ENCODE measurements at regions of chr11 and their contacts with region 1.

Region 1: GRCh38 chr11:59822989-59823566 is 12.5 kb upstream of the MRPL16 start:
- DNase-seq: peak; percentile 55 to 79 (median 72)
- H3K4me3 ChIP-seq: no peak overlapping the region
- H3K4me3 Mint-ChIP-seq: peak overlapping the region in 1 of 2 donors; percentile 84
- H3K27ac ChIP-seq: no peak overlapping the region
- H3K27ac Mint-ChIP-seq: no peak overlapping the region
- H3K4me1 ChIP-seq: peaks cover 12% of the 10 kb centered on the region in 2 donors
- H3K4me1 Mint-ChIP-seq: peaks cover 17% of the 10 kb centered on the region
- H3K27me3 ChIP-seq: no peaks in the 10 kb centered on the region
- H3K27me3 Mint-ChIP-seq: peaks cover 0 to 3% (median 0%) of the 10 kb centered on the region in 3 donors
- CTCF ChIP-seq: peak; percentile 80

Region 2: GRCh38 chr11:59875856-59876519 is 52.9 kb after region 1 on chr11:
- intact Hi-C with region 1: no loop called
- DNase-seq: no peak
- H3K4me3 ChIP-seq: no peak overlapping the region
- H3K4me3 Mint-ChIP-seq: no peak overlapping the region
- H3K27ac ChIP-seq: no peak overlapping the region
- H3K27ac Mint-ChIP-seq: no peak overlapping the region
- H3K4me1 ChIP-seq: no peaks in the 10 kb centered on the region
- H3K4me1 Mint-ChIP-seq: no peaks in the 10 kb centered on the region
- H3K27me3 ChIP-seq: no peaks in the 10 kb centered on the region
- H3K27me3 Mint-ChIP-seq: no peaks in the 10 kb centered on the region
- CTCF ChIP-seq: no peak

Region 3: DNA sequence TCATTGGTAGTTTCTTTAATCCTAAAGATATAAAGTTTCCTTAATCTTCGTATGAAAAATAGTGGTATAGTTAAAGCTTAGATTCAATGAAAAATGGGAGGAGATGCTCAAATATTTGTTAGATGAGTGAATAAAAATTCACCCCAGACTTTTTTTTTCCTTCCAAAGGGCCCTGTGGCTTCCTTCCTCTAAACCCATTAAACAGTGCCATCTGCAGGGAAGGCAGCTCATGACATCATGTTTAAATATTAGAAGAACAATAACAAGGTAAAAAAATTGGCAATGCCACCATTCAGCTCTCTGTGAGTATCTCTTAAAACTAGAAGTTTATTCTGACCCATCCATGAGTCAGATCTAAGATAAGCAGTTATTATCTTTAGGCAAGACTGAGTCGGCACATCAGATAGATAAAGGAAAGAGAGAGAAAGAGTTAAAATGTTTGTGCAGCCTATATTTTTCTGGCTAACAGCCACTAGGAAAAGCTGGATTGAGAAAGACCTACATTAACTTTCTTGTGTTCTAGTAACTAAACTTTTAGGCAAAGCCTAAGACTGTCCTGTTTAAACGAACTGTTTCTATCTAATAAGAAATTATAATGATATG is 96.0 kb after region 1 on chr11:
- intact Hi-C with region 1: loop called (anchors 5 to 10 kb)
- DNase-seq: peak; percentile 13 to 28 (median 17)
- H3K4me3 ChIP-seq: no peak overlapping the region
- H3K4me3 Mint-ChIP-seq: no peak overlapping the region
- H3K27ac ChIP-seq: no peak overlapping the region
- H3K27ac Mint-ChIP-seq: no peak overlapping the region
- H3K4me1 ChIP-seq: no peaks in the 10 kb centered on the region
- H3K4me1 Mint-ChIP-seq: peaks cover 1% of the 10 kb centered on the region
- H3K27me3 ChIP-seq: no peaks in the 10 kb centered on the region
- H3K27me3 Mint-ChIP-seq: no peaks in the 10 kb centered on the region
- CTCF ChIP-seq: peak; percentile 56

Region 4: DNA sequence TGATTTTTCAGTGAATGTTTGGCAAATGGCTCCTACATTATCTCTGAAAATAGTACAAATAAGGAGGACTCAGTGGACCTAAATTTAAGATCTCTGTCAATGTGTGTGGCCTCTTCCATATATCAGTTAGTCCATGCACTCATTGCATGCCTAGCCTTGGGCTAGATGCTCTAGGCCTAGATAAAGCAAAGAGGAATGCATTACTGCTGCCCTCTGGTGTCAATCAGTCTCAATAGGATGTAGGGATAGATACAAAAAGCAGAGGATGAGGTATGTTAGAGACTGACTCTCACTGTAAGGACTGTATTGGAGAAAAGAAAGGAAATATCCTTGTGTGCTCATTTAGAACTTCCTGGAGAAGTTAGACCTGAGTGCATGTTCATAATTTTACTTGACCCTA is 307.4 kb after region 1 on chr11:
- intact Hi-C with region 1: loop called in 1 of 2 experiments (anchors 10 kb)
- DNase-seq: peak; percentile 23 to 49 (median 47)
- H3K4me3 ChIP-seq: no peak overlapping the region
- H3K4me3 Mint-ChIP-seq: no peak overlapping the region
- H3K27ac ChIP-seq: no peak overlapping the region
- H3K27ac Mint-ChIP-seq: no peak overlapping the region
- H3K4me1 ChIP-seq: peaks cover 0 to 2% of the 10 kb centered on the region in 2 donors
- H3K4me1 Mint-ChIP-seq: peaks cover 10% of the 10 kb centered on the region
- H3K27me3 ChIP-seq: no peaks in the 10 kb centered on the region
- H3K27me3 Mint-ChIP-seq: no peaks in the 10 kb centered on the region
- CTCF ChIP-seq: peak; percentile 45

Region 5: GRCh38 chr11:60251485-60252212 is 428.6 kb after region 1 on chr11:
- intact Hi-C with region 1: loop called in 1 of 2 experiments (anchors 10 kb)
- DNase-seq: peak in 2 of 3 donors; percentile 23 to 51
- H3K4me3 ChIP-seq: peak overlapping the region in 1 of 3 experiments; percentile 52
- H3K4me3 Mint-ChIP-seq: peak overlapping the region; percentile 11 to 72
- H3K27ac ChIP-seq: peak overlapping the region in 1 of 2 donors; percentile 74
- H3K27ac Mint-ChIP-seq: peak overlapping the region; percentile 71 to 90 (median 87)
- H3K4me1 ChIP-seq: peaks cover 37 to 43% of the 10 kb centered on the region in 2 donors
- H3K4me1 Mint-ChIP-seq: peaks cover 46% of the 10 kb centered on the region
- H3K27me3 ChIP-seq: no peaks in the 10 kb centered on the region
- H3K27me3 Mint-ChIP-seq: no peaks in the 10 kb centered on the region
- CTCF ChIP-seq: peak; percentile 82

Measured in CD14-positive monocyte (primary cell).